Activated CD4-positive, alpha-beta memory T cell treated with anti-CD3 and anti-CD28 coated beads for 36 hours (primary cell): ENCODE measurements at regions of chr6 and their contacts with region 1.

Region 1: GRCh38 chr6:2931970-2932748 is 29.1 kb upstream of the SERPINB9 start:
- DNase-seq: peak; percentile 93
- H3K4me3 Mint-ChIP-seq: peak overlapping the region; percentile 28
- H3K27ac Mint-ChIP-seq: peak overlapping the region; percentile 77
- H3K4me1 Mint-ChIP-seq: peaks cover 26% of the 10 kb centered on the region
- H3K27me3 Mint-ChIP-seq: no peaks in the 10 kb centered on the region

Region 2: GRCh38 chr6:2810092-2810671 is 122.0 kb before region 1 on chr6:
- CTCF ChIA-PET with region 1: no interaction called
- POLR2A ChIA-PET with region 1: no interaction called
- intact Hi-C with region 1: no loop called
- DNase-seq: peak; percentile 23
- H3K4me3 Mint-ChIP-seq: no peak overlapping the region
- H3K27ac Mint-ChIP-seq: peak overlapping the region; percentile 11
- H3K4me1 Mint-ChIP-seq: peaks cover 12% of the 10 kb centered on the region
- H3K27me3 Mint-ChIP-seq: no peaks in the 10 kb centered on the region

Region 3: DNA sequence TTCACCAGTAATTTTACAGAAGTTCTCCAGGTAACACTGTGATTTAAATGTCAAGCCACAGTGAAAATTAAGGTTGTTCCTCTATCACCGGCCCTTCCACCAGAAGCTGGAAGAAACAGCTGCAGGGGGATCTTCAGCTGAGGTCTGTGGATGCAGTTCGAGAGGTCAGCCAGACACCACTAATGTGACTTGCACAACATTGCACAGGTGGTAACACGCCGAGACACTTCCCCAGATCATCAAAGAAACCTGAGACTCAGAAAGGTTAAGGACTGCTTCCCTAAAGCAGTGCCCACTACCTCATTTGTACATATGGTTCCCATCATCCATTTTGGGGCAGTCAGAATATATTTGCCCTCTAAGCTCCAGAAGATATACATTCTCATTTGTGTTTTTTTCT is 21.0 kb before region 1 on chr6:
- CTCF ChIA-PET with region 1: interaction called, 15 read pairs
- POLR2A ChIA-PET with region 1: no interaction called
- intact Hi-C with region 1: no loop called
- DNase-seq: no peak
- H3K4me3 Mint-ChIP-seq: no peak overlapping the region
- H3K27ac Mint-ChIP-seq: no peak overlapping the region
- H3K4me1 Mint-ChIP-seq: peaks cover 34% of the 10 kb centered on the region
- H3K27me3 Mint-ChIP-seq: no peaks in the 10 kb centered on the region

Region 4: GRCh38 chr6:2921520-2922115 is 10.5 kb before region 1 on chr6:
- CTCF ChIA-PET with region 1: interaction called, 14 read pairs
- POLR2A ChIA-PET with region 1: interaction called, 5 read pairs
- intact Hi-C with region 1: no loop called
- DNase-seq: no peak
- H3K4me3 Mint-ChIP-seq: no peak overlapping the region
- H3K27ac Mint-ChIP-seq: no peak overlapping the region
- H3K4me1 Mint-ChIP-seq: peaks cover 18% of the 10 kb centered on the region
- H3K27me3 Mint-ChIP-seq: no peaks in the 10 kb centered on the region

Region 5: DNA sequence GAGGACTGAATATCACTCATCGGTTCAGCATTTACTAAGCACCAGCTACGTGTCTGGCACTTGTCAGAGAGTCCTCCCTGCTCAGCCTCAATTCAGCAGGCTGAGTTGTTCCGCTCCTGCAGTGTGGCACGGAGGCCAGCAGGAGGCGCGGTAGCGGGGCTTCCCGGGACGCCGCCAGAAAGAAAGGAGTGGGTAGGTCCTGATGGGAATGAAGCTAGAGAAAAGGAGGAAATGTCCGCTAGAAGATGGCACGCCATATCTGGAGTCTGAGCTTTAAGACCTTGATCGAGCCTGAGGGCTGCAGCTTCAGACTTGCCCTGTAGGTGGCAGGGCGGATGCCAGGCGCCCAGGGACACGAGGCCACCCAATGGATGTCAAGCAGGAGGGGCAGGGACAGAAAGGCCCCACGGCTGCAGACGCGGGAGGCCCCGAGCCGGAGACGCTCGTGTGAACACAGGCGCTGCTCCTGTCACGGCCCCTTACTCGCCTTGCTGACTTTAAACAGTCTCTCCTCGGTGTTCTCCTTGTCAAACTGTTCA is 20.5 kb after region 1 on chr6:
- CTCF ChIA-PET with region 1: interaction called, 15 read pairs
- POLR2A ChIA-PET with region 1: no interaction called
- intact Hi-C with region 1: no loop called
- DNase-seq: peak; percentile 65
- H3K4me3 Mint-ChIP-seq: no peak overlapping the region
- H3K27ac Mint-ChIP-seq: no peak overlapping the region
- H3K4me1 Mint-ChIP-seq: no peaks in the 10 kb centered on the region
- H3K27me3 Mint-ChIP-seq: no peaks in the 10 kb centered on the region